Naive thymus-derived CD8-positive, alpha-beta T cell (primary cell): ENCODE measurements at regions of chr1 and their contacts with region 1.

Region 1: DNA sequence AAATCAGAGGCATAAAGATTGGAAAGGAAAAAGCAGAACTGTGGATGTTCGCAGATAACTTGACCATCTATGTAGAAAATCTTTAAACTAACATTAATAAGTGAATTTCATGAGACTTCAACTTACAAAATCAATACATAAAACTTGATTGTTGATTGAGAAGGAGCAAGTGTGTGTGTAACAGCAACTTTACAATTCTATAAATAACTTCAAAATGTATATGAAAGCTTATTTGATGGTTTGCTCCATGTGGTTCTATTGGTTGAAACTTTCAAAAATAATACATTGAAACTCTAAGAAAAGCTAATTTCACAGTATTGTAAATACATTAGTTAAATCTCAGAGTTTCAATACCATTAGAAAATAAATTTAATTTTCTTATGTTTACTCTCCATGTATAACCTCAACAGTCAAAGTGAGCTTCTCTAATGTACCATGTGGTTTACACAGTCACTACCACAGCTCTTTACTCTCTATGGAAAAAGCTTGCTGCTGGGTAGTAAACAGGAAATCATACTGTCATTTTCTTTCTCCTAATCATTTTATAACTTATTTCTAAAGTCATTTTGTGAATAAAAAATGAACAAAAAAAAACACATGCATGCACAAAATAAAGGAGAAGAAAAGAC is 12.0 kb downstream of the AKT3 start:
- DNase-seq: peak in 3 of 10 donors; percentile 49 to 65 (median 55)
- ATAC-seq: peak; percentile 89 to 98
- H3K4me3 Mint-ChIP-seq: peak overlapping the region; percentile 9 to 60 (median 36)
- H3K27ac Mint-ChIP-seq: peak overlapping the region in 9 of 10 donors; percentile 25 to 93 (median 83)
- H3K4me1 Mint-ChIP-seq: peaks cover 8 to 52% (median 28%) of the 10 kb centered on the region in 4 donors
- H3K27me3 Mint-ChIP-seq: no peaks in the 10 kb centered on the region

Region 2: DNA sequence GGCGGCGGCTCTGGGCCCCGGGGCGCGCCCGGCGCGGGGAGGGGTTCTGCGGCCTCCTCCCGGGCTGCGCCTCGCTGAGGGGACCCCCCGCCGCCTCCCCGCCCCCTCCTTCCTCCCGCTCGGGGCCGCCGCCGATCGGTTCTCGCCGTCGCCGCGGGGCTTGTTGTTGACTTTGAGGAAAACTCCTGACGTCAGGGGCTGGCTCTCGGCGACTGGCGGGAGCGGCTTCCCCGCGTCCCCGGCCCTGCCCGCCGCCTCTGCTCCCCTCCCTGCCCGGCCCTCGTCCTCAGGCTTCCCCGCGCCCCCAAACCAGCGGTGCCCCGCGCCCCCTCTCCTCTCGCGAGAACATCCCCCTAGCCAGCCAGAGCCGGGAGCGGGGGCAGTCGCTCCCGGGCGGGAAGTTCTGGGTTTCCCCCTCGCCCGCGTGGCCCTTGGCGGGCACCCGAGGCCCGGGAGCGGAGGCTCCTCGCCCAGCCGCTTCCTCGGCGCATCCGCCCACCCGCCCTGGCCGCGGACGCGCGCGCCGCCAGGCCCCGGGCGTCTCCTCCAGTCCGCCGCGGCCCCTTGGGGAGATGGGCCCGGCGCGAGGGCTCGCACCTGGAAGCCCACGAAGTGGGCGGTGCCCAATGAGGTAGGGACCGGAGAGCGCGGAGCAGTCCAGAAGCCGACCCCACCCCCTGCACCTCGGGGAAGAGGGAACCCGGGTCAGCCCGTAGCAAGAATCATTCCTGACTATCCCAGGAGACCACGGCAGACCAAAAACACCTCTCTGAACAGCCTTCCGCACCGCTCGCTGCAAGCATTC is 12.6 kb after region 1 on chr1:
- POLR2A ChIA-PET with region 1: interaction called, 11 read pairs
- DNase-seq: peak; percentile 37 to 89 (median 82)
- ATAC-seq: peak; percentile 56 to 58
- H3K4me3 Mint-ChIP-seq: peak overlapping the region; percentile 86 to 96 (median 94)
- H3K27ac Mint-ChIP-seq: peak overlapping the region; percentile 84 to 98 (median 97)
- H3K4me1 Mint-ChIP-seq: peaks cover 7 to 39% (median 26%) of the 10 kb centered on the region in 4 donors
- H3K27me3 Mint-ChIP-seq: no peaks in the 10 kb centered on the region

Region 3: GRCh38 chr1:243864913-243865312 is 26.9 kb after region 1 on chr1:
- POLR2A ChIA-PET with region 1: no interaction called
- DNase-seq: no peak
- ATAC-seq: no peak
- H3K4me3 Mint-ChIP-seq: no peak overlapping the region
- H3K27ac Mint-ChIP-seq: no peak overlapping the region
- H3K4me1 Mint-ChIP-seq: no peaks in the 10 kb centered on the region
- H3K27me3 Mint-ChIP-seq: peaks cover 0 to 3% (median 2%) of the 10 kb centered on the region in 5 donors